Activated B cell treated with CpG ODN at 0.5 μM for 24 hours (primary cell): ENCODE measurements at regions of chrX and their contacts with region 1.

Region 1: DNA sequence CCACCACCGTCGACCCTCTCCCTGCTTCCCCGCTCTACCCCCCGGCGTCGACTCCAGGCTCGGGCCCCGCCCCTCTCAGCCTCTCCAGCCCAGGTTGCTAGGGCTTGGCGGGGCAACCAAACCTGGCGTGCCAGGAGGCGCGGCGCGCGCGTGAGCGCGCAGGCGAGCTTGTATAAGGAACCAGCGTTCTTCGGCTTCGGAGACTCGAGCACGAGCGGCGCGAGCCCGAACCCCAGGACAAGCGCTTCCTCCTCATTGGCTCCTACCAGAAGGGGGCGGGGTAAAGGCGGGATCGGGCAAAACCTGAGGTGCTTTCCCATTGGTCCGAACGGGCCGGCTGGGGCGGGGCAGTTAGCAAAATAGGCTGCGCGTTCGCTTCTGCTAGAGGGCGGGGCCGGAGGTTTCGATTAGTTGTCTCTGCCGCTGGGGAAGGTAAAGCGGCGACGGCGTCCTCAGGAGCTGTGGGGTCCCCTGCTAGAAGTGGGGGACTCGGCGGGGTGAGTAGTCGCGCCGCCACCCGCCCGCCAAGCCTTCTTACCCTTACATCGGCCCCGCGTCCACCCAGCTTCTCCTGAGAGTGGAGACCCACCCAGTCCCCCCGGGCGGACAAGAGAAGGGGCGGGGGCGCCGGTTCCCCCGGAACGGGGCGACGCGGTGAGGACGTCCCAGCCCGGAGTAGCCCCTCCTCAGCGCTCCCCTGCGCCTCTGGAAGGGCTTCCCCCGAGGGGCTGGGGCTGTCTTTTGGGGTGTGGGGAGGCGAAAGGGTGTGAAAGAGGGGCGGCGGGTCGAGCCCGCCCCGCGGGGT is at the start of gene CDKL5:
- DNase-seq: peak; percentile 82
- ATAC-seq: peak; percentile 93
- H3K4me3 Mint-ChIP-seq: peak within 1 kb of the TSS; percentile 86
- H3K27ac Mint-ChIP-seq: peak within 1 kb of the TSS; percentile 77
- H3K4me1 Mint-ChIP-seq: peaks cover 16% of the 10 kb centered on the region
- H3K27me3 Mint-ChIP-seq: no peaks in the 10 kb centered on the region
- CTCF ChIP-seq: no peak
- total RNA-seq, gene CDKL5: 3.7 and 3.8 TPM in 2 replicates

Region 2: GRCh38 chrX:18354369-18355223 is 70.8 kb before region 1 on chrX and contains the start of gene SCML2:
- CTCF ChIA-PET with region 1: no interaction called
- POLR2A ChIA-PET with region 1: no interaction called
- intact Hi-C with region 1: loop called (anchors 1 kb)
- DNase-seq: peak; percentile 45
- ATAC-seq: peak; percentile 78
- H3K4me3 Mint-ChIP-seq: peak within 1 kb of the TSS; percentile 85
- H3K27ac Mint-ChIP-seq: no peak within 1 kb of the TSS
- H3K4me1 Mint-ChIP-seq: peaks cover 6% of the 10 kb centered on the region
- H3K27me3 Mint-ChIP-seq: no peaks in the 10 kb centered on the region
- CTCF ChIP-seq: no peak
- total RNA-seq, gene SCML2: 1.3 and 2.1 TPM in 2 replicates

Region 3: DNA sequence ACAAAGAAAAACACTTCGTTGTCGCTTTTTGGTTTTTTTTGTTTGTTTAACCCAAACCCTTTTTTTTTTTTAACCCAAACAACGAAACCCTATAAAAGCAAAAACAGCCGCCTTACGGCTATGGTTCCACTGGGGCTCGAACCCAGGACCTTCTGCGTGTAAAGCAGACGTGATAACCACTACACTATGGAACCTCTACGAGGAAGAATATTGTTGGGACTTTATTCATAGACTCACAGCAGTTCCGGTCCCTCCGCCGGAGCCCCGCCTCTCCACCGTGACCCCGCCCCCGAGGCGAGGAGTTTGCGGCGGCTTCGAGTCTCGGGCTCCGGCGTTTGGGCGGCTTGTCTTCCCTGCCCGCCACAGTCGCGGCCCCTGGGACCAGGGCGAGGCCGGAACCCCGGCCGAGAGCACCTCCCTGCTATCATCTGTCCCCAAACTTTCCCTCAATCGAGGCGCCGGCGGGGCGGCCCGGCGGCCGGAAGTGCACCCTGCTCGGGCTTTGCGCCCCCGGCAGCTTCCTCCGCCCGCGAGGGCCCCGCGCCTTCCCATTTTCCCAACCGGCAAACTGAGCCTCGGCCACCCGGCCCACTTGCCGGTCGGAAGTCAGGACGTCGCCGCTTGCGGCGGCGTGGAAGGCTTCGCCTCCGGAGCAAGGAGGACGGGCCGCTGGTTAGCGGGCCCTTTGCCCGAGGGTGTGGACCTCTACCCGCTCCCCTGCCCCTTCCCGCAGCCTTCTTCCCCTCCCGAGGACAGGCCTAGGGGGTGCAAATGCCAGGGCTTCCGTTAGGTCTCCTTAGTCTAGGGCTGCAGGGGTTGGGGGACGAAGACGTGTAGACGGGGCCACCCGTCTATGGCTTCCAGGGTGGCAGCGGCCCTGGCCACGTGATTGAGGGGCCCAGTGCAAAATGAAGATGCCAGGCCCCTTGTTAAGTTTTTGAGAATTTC is 249.7 kb after region 1 on chrX:
- CTCF ChIA-PET with region 1: no interaction called
- POLR2A ChIA-PET with region 1: no interaction called
- intact Hi-C with region 1: loop called (anchors 1 kb)
- DNase-seq: peak; percentile 75
- ATAC-seq: peak; percentile 88
- H3K4me3 Mint-ChIP-seq: peak overlapping the region; percentile 82
- H3K27ac Mint-ChIP-seq: peak overlapping the region; percentile 85
- H3K4me1 Mint-ChIP-seq: peaks cover 12% of the 10 kb centered on the region
- H3K27me3 Mint-ChIP-seq: no peaks in the 10 kb centered on the region
- CTCF ChIP-seq: no peak

Region 4: DNA sequence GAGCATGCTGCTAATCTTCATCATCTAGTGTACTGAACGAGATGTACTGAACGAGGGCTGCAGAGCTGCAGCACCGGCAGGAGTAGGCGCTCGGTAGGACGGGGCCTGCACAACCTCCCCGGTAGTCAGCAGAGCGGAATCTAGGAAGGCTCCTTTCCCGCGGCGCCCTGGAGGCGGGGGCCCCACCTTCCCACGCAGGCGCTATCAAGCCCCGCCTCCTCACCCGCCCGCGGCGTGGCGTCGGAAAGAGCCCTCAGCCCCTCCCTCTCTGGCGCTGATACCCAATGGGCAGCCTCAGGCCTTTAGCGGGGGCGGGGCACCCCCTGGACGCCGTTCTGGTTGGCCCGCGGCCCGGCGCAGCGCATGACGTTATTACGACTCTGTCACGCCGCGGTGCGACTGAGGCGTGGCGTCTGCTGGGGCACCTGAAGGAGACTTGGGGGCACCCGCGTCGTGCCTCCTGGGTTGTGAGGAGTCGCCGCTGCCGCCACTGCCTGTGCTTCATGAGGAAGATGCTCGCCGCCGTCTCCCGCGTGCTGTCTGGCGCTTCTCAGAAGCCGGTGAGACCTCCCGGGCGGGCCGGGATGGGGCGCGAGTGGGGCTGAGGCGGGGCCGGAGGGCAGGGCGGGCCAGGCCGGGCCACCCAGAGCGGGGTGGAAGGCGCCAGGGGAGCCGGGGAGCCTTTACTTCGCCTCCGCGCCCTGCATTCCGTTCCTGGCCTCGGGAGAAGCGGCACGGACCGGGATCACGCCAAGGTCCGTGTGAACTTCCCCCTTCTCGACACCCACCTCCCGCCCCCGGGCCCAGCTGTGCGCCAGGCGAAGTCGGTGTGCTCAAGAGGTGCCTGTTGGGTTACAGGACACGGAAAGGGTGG is 918.4 kb after region 1 on chrX and contains the start of gene PDHA1:
- CTCF ChIA-PET with region 1: no interaction called
- POLR2A ChIA-PET with region 1: no interaction called
- intact Hi-C with region 1: loop called (anchors 1 kb)
- DNase-seq: peak; percentile 81
- ATAC-seq: peak; percentile 98
- H3K4me3 Mint-ChIP-seq: peak within 1 kb of the TSS; percentile 88
- H3K27ac Mint-ChIP-seq: peak within 1 kb of the TSS; percentile 83
- H3K4me1 Mint-ChIP-seq: peaks cover 14% of the 10 kb centered on the region
- H3K27me3 Mint-ChIP-seq: peaks cover 1% of the 10 kb centered on the region
- CTCF ChIP-seq: no peak
- total RNA-seq, gene PDHA1: 122 and 124 TPM in 2 replicates